ENCODE measurements at regions of chr5 and their contacts with region 1.

Region 1: DNA sequence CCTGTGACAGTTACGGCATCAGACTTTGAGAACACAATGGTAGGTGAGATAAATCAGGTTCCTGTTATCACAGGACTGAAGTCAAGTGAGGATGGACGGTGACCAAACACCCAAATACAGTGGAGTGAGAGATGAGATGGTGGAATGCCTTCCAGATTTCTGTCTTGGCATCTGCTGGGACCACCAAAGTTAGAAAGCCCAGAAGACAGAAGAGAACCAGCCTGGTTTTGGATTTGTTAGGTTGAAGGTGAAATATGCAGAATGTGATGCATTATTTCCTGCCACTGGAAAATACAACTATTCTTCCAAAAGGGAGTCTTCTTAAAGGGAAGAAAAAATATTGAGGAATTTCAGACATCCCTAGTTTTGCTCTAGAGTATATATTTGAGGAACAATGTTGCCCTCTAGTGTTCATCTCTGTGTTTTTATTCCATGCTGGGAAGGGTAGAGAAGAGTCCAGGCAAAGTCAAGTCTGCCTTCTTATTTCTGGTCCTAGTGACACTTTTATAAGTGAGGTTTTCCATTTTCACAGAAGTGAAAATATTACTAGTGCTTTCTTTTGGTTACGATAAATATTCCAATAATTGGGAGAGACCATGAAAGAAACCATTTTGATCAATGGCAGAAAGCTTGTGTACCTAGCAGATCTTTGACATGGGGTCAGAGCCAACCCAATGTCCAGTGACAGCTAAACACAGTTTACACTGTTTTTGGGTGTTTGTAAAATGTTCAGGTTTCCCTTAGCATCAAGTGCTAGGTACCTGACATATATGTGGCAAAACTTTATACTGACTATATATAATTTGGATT is 142.3 kb upstream of the ANKH start:
- DNase-seq: no peak
- ATAC-seq: peak; percentile 72 to 83 (median 80)
- H3K4me3 ChIP-seq: no peak overlapping the region
- H3K27ac ChIP-seq: no peak overlapping the region
- H3K4me1 ChIP-seq: peaks cover 0 to 18% (median 12%) of the 10 kb centered on the region in 12 donors
- H3K27me3 ChIP-seq: no peaks in the 10 kb centered on the region
- CTCF ChIP-seq: peak; percentile 52 to 81 (median 70)
- POLR2A ChIP-seq: no peak

Region 2: GRCh38 chr5:14250084-14250695 is 763.7 kb before region 1 on chr5:
- intact Hi-C with region 1: loop called in 1 of 10 experiments (anchors 5 kb)
- DNase-seq: peak in 4 of 5 donors; percentile 66 to 77 (median 72)
- ATAC-seq: peak; percentile 83 to 91 (median 86)
- H3K4me3 ChIP-seq: peak overlapping the region in 7 of 12 donors; percentile 11 to 31 (median 25)
- H3K27ac ChIP-seq: peak overlapping the region; percentile 10 to 80 (median 70)
- H3K4me1 ChIP-seq: peaks cover 9 to 86% (median 57%) of the 10 kb centered on the region in 12 donors
- H3K27me3 ChIP-seq: no peaks in the 10 kb centered on the region
- CTCF ChIP-seq: no peak
- POLR2A ChIP-seq: no peak

Region 3: GRCh38 chr5:14351845-14352712 is 661.8 kb before region 1 on chr5:
- intact Hi-C with region 1: loop called in 1 of 10 experiments (anchors 10 kb)
- DNase-seq: peak; percentile 57 to 73 (median 63)
- ATAC-seq: peak; percentile 64 to 89 (median 86)
- H3K4me3 ChIP-seq: no peak overlapping the region
- H3K27ac ChIP-seq: no peak overlapping the region
- H3K4me1 ChIP-seq: peaks cover 0 to 43% (median 12%) of the 10 kb centered on the region in 12 donors
- H3K27me3 ChIP-seq: no peaks in the 10 kb centered on the region
- CTCF ChIP-seq: peak; percentile 92 to 99 (median 96)
- POLR2A ChIP-seq: no peak

Region 4: GRCh38 chr5:14399054-14399692 is 614.7 kb before region 1 on chr5:
- intact Hi-C with region 1: loop called in 6 of 10 experiments (anchors 5 to 10 kb)
- DNase-seq: no peak
- ATAC-seq: peak in 2 of 4 donors; percentile 50
- H3K4me3 ChIP-seq: no peak overlapping the region
- H3K27ac ChIP-seq: peak overlapping the region in 2 of 12 donors; percentile 11 to 28
- H3K4me1 ChIP-seq: peaks cover 0 to 29% (median 8%) of the 10 kb centered on the region in 12 donors
- H3K27me3 ChIP-seq: no peaks in the 10 kb centered on the region
- CTCF ChIP-seq: peak; percentile 52 to 85 (median 75)
- POLR2A ChIP-seq: no peak

Region 5: GRCh38 chr5:14405267-14405666 is 608.6 kb before region 1 on chr5:
- intact Hi-C with region 1: loop called in 1 of 10 experiments (anchors 10 kb)
- DNase-seq: no peak
- ATAC-seq: no peak
- H3K4me3 ChIP-seq: no peak overlapping the region
- H3K27ac ChIP-seq: peak overlapping the region in 2 of 12 donors; percentile 11 to 32
- H3K4me1 ChIP-seq: peaks cover 0 to 48% (median 22%) of the 10 kb centered on the region in 12 donors
- H3K27me3 ChIP-seq: no peaks in the 10 kb centered on the region
- CTCF ChIP-seq: peak in 3 of 12 donors; percentile 23 to 31 (median 27)
- POLR2A ChIP-seq: no peak

Region 6: GRCh38 chr5:14644623-14645237 is 369.1 kb before region 1 on chr5:
- intact Hi-C with region 1: no loop called
- DNase-seq: no peak
- ATAC-seq: no peak
- H3K4me3 ChIP-seq: no peak overlapping the region
- H3K27ac ChIP-seq: no peak overlapping the region
- H3K4me1 ChIP-seq: peaks cover 0 to 4% (median 0%) of the 10 kb centered on the region in 12 donors
- H3K27me3 ChIP-seq: peaks cover 0 to 7% (median 0%) of the 10 kb centered on the region in 9 donors
- CTCF ChIP-seq: no peak
- POLR2A ChIP-seq: no peak

Region 7: GRCh38 chr5:14685757-14686156 is 328.1 kb before region 1 on chr5:
- intact Hi-C with region 1: loop called in 7 of 10 experiments (anchors 2 to 5 kb)
- DNase-seq: no peak
- ATAC-seq: peak; percentile 11 to 54 (median 43)
- H3K4me3 ChIP-seq: no peak overlapping the region
- H3K27ac ChIP-seq: peak overlapping the region in 10 of 12 donors; percentile 30 to 87 (median 75)
- H3K4me1 ChIP-seq: peaks cover 0 to 59% (median 23%) of the 10 kb centered on the region in 12 donors
- H3K27me3 ChIP-seq: no peaks in the 10 kb centered on the region
- CTCF ChIP-seq: peak; percentile 31 to 75 (median 58)
- POLR2A ChIP-seq: no peak

Region 8: DNA sequence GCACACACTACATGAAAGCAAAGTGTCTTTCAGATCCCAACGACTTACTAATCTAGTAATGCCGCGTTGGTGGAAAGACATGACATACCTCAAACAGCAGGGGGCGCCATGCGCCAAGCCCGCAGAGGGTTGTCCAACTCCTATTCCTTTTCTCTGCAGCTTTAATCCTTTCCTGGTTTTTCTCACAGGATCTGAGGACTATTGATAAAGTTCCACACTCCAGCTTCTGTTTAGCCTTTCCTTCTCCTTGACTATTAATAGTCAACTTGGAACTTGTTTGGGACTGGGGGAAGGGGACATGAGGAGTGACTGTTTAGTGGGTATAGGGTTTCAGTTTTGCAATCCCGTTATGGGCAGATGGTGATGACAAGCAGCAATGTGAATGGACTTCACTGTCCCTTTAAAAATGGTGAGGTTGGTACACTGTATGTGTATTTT is 286.4 kb before region 1 on chr5:
- intact Hi-C with region 1: loop called in 2 of 10 experiments (anchors 1 to 5 kb)
- DNase-seq: peak; percentile 79 to 90 (median 79)
- ATAC-seq: peak; percentile 60 to 78 (median 68)
- H3K4me3 ChIP-seq: no peak overlapping the region
- H3K27ac ChIP-seq: peak overlapping the region in 6 of 12 donors; percentile 8 to 65 (median 34)
- H3K4me1 ChIP-seq: peaks cover 0 to 41% (median 25%) of the 10 kb centered on the region in 12 donors
- H3K27me3 ChIP-seq: no peaks in the 10 kb centered on the region
- CTCF ChIP-seq: peak; percentile 90 to 99 (median 96)
- POLR2A ChIP-seq: no peak

Measured in heart left ventricle (tissue), 16 donors.